CD4-positive, alpha-beta T cell (primary cell): ENCODE measurements at regions of chr10 and their contacts with region 1.

Region 1: DNA sequence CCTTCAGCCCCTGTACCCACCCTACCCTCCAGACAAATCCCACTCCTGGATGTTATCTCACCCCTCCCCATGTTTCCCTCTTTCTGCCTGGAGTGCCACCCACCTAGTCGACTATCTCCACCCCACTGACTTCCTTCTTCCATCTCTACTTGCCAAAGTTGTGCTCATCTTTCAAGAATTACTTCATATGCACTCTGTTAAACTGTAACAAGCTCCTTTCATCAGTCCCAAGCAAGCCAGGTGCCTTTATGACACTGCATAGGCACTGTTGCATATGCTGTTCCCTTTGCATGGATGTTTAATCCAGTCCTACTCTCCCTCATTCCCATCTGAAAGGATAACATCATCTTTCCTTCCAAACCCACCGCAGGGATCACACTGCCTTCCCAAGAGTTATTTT is 8.9 kb upstream of the CDK1 start:
- DNase-seq: no peak
- ATAC-seq: no peak
- H3K4me3 ChIP-seq: no peak overlapping the region
- H3K4me3 Mint-ChIP-seq: no peak overlapping the region
- H3K27ac ChIP-seq: no peak overlapping the region
- H3K27ac Mint-ChIP-seq: no peak overlapping the region
- H3K4me1 ChIP-seq: peaks cover 5% of the 10 kb centered on the region
- H3K4me1 Mint-ChIP-seq: peaks cover 20% of the 10 kb centered on the region
- H3K27me3 ChIP-seq: no peaks in the 10 kb centered on the region
- H3K27me3 Mint-ChIP-seq: no peaks in the 10 kb centered on the region
- CTCF ChIP-seq: no peak

Region 2: DNA sequence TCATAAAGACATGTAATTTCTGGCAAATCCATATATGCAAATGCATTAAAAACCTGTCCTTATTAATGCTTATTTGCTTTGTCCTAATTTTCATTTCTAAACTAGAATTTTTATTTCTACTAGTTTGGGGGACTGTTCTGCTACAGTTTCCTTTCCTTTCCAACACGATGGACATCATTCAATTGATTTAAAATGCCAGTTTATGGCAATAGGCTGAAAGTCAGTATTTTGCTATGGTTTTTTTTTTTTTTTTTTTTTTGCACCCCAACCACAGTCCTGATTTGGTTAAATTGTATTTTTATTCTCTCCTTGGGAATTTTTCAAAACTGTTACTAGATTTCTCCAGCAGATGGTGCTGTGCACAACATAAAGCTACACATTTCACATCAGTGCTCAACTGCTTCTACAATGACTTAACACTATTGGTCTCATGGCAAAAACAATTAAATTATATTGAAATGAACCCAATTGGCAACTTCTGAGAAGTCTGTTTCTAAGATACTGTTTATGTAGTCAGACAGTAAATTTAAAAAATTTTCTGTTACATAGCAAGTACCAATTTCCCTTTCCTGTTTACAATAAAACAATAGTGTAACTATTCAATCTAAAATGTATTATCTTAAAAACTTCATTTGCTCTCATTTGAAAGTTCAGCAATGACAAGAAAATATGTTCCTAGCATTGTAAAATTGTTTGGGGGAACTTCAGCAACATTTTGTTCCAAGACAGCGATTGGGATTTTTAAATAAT is 669.2 kb before region 1 on chr10:
- CTCF ChIA-PET with region 1: no interaction called
- POLR2A ChIA-PET with region 1: no interaction called
- intact Hi-C with region 1: loop called (anchors 2 to 5 kb)
- DNase-seq: peak in 4 of 14 experiments; percentile 6 to 67 (median 56)
- ATAC-seq: peak; percentile 66
- H3K4me3 ChIP-seq: no peak overlapping the region
- H3K4me3 Mint-ChIP-seq: no peak overlapping the region
- H3K27ac ChIP-seq: no peak overlapping the region
- H3K27ac Mint-ChIP-seq: no peak overlapping the region
- H3K4me1 ChIP-seq: no peaks in the 10 kb centered on the region
- H3K4me1 Mint-ChIP-seq: no peaks in the 10 kb centered on the region
- H3K27me3 ChIP-seq: no peaks in the 10 kb centered on the region
- H3K27me3 Mint-ChIP-seq: no peaks in the 10 kb centered on the region
- CTCF ChIP-seq: peak; percentile 76

Region 3: DNA sequence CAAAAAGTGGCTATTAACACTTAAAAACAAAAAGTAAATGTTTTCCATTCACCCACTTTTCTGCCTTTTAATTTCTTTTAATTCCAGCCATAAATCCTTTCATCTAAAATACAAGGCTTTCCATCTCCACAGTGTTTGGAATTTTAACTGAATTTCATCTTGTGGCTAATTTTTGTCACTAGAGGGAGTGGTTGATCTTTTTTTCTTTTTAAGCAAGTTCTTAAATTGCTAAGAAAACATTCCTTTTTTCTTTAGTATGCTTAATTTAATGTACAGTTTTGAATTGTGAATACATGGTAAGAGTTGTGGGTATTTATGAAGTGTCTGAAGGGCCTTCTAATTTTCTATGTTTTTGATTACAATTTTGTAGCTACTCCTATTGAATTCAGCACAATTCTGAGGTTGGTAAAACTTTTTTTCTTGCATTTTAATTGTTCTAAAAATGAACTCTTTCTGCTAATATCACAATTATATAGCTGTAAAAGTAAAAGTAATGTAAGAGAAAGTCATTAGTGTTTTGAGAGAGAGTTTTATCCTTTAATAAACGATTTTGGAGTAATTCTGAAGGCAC is 324.8 kb before region 1 on chr10:
- CTCF ChIA-PET with region 1: interaction called, 3 read pairs
- POLR2A ChIA-PET with region 1: no interaction called
- intact Hi-C with region 1: loop called (anchors 1 to 5 kb)
- DNase-seq: peak in 3 of 14 experiments; percentile 12 to 21 (median 13)
- ATAC-seq: no peak
- H3K4me3 ChIP-seq: no peak overlapping the region
- H3K4me3 Mint-ChIP-seq: no peak overlapping the region
- H3K27ac ChIP-seq: no peak overlapping the region
- H3K27ac Mint-ChIP-seq: no peak overlapping the region
- H3K4me1 ChIP-seq: peaks cover 2% of the 10 kb centered on the region
- H3K4me1 Mint-ChIP-seq: peaks cover 23% of the 10 kb centered on the region
- H3K27me3 ChIP-seq: no peaks in the 10 kb centered on the region
- H3K27me3 Mint-ChIP-seq: no peaks in the 10 kb centered on the region
- CTCF ChIP-seq: peak; percentile 33

Region 4: DNA sequence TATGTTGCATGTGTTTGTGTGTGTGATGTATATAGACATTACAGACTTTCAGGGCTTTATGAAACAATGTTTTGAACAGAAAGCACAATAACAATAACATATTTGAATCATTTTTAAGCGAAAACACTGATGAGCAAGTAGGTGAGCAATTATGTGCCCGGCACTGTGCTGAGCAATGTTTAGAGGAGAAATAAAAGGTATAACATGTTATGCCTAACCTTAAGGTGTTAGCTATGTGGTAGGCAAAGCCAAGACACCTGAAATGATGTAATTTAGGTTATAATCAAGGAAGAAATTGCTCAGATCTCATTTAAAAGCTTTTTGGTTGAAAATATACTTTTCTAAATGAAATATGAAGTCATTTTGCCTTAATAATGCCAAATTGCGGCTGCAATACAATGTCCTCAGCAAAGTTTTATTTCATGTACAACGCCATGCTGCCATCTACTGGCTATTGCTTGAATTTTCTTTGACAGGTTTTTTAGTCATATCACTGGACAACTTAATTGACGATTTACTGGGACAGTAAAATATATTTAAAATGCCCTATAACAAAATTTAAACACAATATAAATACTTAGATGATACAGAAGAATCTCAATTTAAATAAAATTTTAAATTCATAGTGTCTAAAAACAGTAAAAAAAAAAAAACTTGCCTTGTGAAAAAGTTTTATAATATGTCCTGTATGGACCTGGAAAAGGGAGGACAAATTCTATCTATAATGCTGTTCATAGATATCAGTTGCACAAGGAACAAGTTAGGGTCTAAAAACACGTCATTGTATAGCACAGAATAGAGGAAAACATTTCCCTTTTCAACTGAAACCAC is 122.2 kb before region 1 on chr10:
- CTCF ChIA-PET with region 1: interaction called, 8 read pairs
- POLR2A ChIA-PET with region 1: interaction called, 3 read pairs
- intact Hi-C with region 1: loop called in 1 of 2 experiments (anchors 5 kb)
- DNase-seq: peak in 9 of 14 experiments; percentile 8 to 78 (median 33)
- ATAC-seq: peak; percentile 40
- H3K4me3 ChIP-seq: no peak overlapping the region
- H3K4me3 Mint-ChIP-seq: no peak overlapping the region
- H3K27ac ChIP-seq: no peak overlapping the region
- H3K27ac Mint-ChIP-seq: peak overlapping the region; percentile 5
- H3K4me1 ChIP-seq: peaks cover 6% of the 10 kb centered on the region
- H3K4me1 Mint-ChIP-seq: peaks cover 66% of the 10 kb centered on the region
- H3K27me3 ChIP-seq: no peaks in the 10 kb centered on the region
- H3K27me3 Mint-ChIP-seq: no peaks in the 10 kb centered on the region
- CTCF ChIP-seq: peak; percentile 91

Region 5: DNA sequence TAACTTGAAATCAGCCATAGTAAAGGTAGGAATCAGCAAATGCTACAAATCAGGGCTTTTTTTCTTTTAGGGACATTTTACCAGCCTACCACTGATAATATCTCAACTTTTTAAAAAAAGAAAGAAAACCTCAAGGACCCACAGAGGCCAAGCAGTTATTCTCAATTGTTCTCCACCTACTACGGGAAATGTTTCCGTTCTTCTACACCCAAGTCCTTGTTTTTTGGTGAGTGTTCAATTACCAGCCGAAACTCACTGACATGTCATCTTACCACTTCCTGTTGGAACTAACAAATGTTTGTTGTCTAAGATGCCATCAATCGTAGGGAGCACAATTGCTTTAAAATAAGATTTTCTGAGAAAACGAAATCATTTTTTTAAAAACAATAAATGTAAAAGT is 41.4 kb before region 1 on chr10:
- CTCF ChIA-PET with region 1: interaction called, 3 read pairs
- POLR2A ChIA-PET with region 1: interaction called, 11 read pairs
- intact Hi-C with region 1: loop called in 1 of 2 experiments (anchors 5 kb)
- DNase-seq: peak in 6 of 14 experiments; percentile 8 to 90 (median 52)
- ATAC-seq: peak; percentile 68
- H3K4me3 ChIP-seq: peak overlapping the region; percentile 44
- H3K4me3 Mint-ChIP-seq: peak overlapping the region; percentile 81
- H3K27ac ChIP-seq: peak overlapping the region; percentile 60 to 65
- H3K27ac Mint-ChIP-seq: peak overlapping the region; percentile 99
- H3K4me1 ChIP-seq: peaks cover 16% of the 10 kb centered on the region
- H3K4me1 Mint-ChIP-seq: peaks cover 94% of the 10 kb centered on the region
- H3K27me3 ChIP-seq: no peaks in the 10 kb centered on the region
- H3K27me3 Mint-ChIP-seq: no peaks in the 10 kb centered on the region
- CTCF ChIP-seq: no peak

Region 6: GRCh38 chr10:60816628-60817397 is 47.4 kb after region 1 on chr10:
- CTCF ChIA-PET with region 1: no interaction called
- POLR2A ChIA-PET with region 1: no interaction called
- intact Hi-C with region 1: no loop called
- DNase-seq: peak in 8 of 14 experiments; percentile 2 to 77 (median 24)
- ATAC-seq: peak; percentile 75
- H3K4me3 ChIP-seq: no peak overlapping the region
- H3K4me3 Mint-ChIP-seq: no peak overlapping the region
- H3K27ac ChIP-seq: no peak overlapping the region
- H3K27ac Mint-ChIP-seq: no peak overlapping the region
- H3K4me1 ChIP-seq: no peaks in the 10 kb centered on the region
- H3K4me1 Mint-ChIP-seq: no peaks in the 10 kb centered on the region
- H3K27me3 ChIP-seq: no peaks in the 10 kb centered on the region
- H3K27me3 Mint-ChIP-seq: no peaks in the 10 kb centered on the region
- CTCF ChIP-seq: peak; percentile 87